CD8-positive, alpha-beta T cell (primary cell): ENCODE measurements at regions of chr3 and their contacts with region 1.

Region 1: DNA sequence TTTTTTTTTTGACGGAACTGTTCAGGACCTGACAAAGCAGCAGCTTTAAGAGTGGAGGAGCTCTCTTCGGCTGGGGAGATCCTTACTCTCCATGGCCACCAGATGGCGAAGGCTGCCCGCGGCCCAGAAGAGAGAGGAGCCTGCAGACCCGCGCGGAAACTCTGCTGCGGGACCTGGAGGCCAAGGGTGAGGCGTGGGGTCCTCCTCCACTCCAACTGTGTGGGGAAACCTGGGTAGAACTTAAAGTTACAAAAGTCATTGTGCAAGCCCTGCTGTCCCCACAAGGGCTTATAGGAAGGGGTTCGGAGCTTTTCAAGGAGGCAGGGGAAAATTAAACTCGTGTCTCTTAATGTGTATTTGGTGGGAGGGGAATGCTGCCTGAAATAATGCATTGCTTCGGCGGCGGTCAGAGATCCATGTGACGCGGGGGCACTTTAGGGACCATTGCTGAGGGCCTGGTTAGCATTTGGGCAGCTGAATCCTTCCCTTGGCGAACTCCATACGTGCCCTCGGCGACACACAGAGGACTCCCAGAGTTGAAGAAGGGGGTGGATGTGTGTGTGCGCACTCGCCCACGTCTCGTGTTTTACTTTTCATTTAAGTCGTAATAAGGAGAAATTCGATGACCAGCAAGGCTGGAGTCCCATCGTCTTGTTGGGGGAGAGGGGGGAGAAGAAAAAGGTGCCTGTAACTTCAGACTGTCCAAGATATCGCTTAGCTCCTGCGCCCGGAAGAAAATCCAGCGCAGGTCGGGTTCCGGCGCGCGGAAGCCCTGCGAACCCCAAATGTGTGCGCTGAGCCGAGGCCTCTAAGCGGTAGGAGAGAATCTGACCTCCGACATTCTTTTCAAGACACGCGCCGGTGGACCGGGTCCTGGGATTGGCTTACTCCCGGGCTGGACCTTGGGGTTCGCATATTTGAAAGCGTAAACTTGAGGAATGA is 9.7 kb downstream of the EOMES start:
- DNase-seq: peak; percentile 61 to 91 (median 79)
- ATAC-seq: peak; percentile 86
- H3K4me3 ChIP-seq: peak overlapping the region; percentile 73 to 94
- H3K4me3 Mint-ChIP-seq: peak overlapping the region; percentile 95
- H3K27ac ChIP-seq: peak overlapping the region; percentile 44 to 74
- H3K27ac Mint-ChIP-seq: peak overlapping the region; percentile 87
- H3K4me1 ChIP-seq: peaks cover 20% of the 10 kb centered on the region
- H3K4me1 Mint-ChIP-seq: peaks cover 28% of the 10 kb centered on the region
- H3K27me3 ChIP-seq: peaks cover 4 to 11% of the 10 kb centered on the region in 2 experiments
- H3K27me3 Mint-ChIP-seq: peaks cover 18% of the 10 kb centered on the region
- CTCF ChIP-seq: peak; percentile 67

Region 2: DNA sequence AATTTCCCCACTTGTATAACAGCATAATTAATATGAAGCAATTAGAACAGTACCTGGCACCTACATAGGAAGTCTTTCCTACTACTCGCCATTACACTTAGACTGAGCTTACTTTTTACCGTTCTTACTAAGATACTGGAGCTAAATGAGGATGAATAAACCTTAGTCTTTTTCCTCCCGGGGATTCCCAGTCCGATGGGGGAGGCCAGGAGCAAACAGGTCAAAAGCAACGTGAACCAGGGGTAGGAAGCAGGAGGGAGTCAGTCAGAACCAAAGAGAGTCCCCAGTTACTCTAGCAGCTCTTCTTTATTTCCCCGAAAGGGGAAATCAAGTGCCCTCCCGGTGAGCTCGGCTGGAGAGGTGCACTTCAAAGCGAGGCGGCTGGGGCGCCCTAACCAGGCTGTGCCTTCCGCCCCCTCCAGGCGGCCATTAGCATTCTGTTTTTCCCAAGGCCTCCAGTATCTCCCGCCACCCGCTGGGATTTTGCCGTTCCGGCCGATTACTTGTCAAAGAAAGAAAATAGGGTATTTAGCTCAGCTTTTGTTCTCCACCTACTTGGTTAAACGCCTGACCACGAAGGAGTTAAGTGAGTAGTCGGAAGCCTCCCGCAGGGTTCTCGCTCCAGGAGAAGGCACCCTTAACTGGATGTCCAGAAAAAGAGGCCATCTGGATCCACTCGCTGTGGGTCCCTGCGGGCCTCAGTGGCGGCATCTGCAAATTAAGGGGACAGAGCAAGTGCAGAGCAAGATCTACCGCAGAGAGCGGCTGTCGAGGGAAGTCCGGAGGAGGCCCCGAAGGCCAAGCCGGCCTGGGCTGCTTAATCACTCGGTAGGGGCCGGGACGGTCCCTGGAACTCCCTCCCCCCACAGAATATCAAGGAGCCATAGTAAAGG is 16.0 kb after region 1 on chr3:
- CTCF ChIA-PET with region 1: interaction called, 69 read pairs
- POLR2A ChIA-PET with region 1: interaction called, 30 read pairs
- intact Hi-C with region 1: no loop called
- DNase-seq: peak in 2 of 9 experiments; percentile 51 to 52
- ATAC-seq: peak; percentile 48
- H3K4me3 ChIP-seq: no peak overlapping the region
- H3K4me3 Mint-ChIP-seq: peak overlapping the region; percentile 54
- H3K27ac ChIP-seq: no peak overlapping the region
- H3K27ac Mint-ChIP-seq: no peak overlapping the region
- H3K4me1 ChIP-seq: peaks cover 43% of the 10 kb centered on the region
- H3K4me1 Mint-ChIP-seq: peaks cover 49% of the 10 kb centered on the region
- H3K27me3 ChIP-seq: peaks cover 40 to 60% of the 10 kb centered on the region in 2 experiments
- H3K27me3 Mint-ChIP-seq: peaks cover 73% of the 10 kb centered on the region
- CTCF ChIP-seq: no peak

Region 3: DNA sequence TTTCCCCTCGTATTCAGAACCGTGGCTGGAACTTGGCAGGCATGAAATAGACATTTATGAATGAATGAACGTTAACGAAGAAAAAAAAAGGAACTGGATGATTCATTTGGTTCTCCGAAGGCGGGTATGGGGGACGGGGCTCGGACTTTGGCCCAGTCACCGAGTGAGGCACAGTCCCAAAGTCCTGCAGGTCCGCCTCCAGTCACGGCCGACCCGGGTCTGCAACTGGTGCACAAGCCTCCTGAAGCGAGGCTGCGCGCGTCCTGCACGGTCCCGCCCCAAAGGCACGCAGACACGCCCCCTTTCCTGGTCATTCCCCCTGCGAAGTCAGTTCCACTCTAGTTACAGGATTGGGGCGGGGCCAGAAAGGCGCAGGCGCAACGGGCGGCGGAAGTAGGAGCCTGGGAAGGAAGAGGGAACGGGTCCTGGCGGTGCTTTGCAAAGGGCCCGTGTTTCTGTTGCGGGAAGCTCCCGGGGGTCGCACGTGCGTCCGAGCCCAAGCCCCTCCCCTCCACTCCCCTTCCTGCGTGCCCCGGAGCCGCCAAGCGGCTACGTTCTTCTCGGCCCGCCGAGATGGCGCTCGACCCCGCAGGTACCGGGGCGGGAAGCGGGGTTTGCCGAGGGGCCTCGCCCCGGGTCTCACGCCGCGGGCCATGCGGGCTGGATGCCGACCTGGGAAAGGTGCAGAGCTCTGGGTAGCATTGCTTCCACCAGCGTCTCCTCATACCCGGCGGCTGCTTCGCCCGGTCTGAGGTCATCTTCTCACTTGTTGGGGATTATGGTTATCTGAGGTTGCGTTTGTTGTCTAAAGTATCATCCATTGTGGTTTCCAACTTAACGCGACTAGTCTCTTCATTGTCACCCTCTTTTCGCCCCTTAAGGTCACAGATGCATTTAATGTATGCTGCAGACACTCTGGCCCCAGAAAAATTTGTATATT is 529.1 kb after region 1 on chr3 and contains the start of gene CMC1:
- CTCF ChIA-PET with region 1: interaction called, 11 read pairs
- POLR2A ChIA-PET with region 1: interaction called, 5 read pairs
- intact Hi-C with region 1: loop called in 1 of 2 experiments (anchors 2 kb)
- DNase-seq: peak; percentile 68 to 94 (median 90)
- ATAC-seq: peak; percentile 90
- H3K4me3 ChIP-seq: peak within 1 kb of the TSS; percentile 76 to 89
- H3K4me3 Mint-ChIP-seq: peak within 1 kb of the TSS; percentile 95
- H3K27ac ChIP-seq: peak within 1 kb of the TSS; percentile 53 to 77
- H3K27ac Mint-ChIP-seq: peak within 1 kb of the TSS; percentile 92
- H3K4me1 ChIP-seq: peaks cover 29% of the 10 kb centered on the region
- H3K4me1 Mint-ChIP-seq: peaks cover 50% of the 10 kb centered on the region
- H3K27me3 ChIP-seq: no peaks in the 10 kb centered on the region
- H3K27me3 Mint-ChIP-seq: no peaks in the 10 kb centered on the region
- CTCF ChIP-seq: no peak
- total RNA-seq, gene CMC1: 28.0 to 31.0 TPM

Region 4: GRCh38 chr3:28308196-28308595 is 595.8 kb after region 1 on chr3:
- CTCF ChIA-PET with region 1: interaction called, 12 read pairs
- POLR2A ChIA-PET with region 1: no interaction called
- intact Hi-C with region 1: no loop called
- DNase-seq: no peak
- ATAC-seq: no peak
- H3K4me3 ChIP-seq: no peak overlapping the region
- H3K4me3 Mint-ChIP-seq: no peak overlapping the region
- H3K27ac ChIP-seq: no peak overlapping the region
- H3K27ac Mint-ChIP-seq: no peak overlapping the region
- H3K4me1 ChIP-seq: no peaks in the 10 kb centered on the region
- H3K4me1 Mint-ChIP-seq: peaks cover 18% of the 10 kb centered on the region
- H3K27me3 ChIP-seq: no peaks in the 10 kb centered on the region
- H3K27me3 Mint-ChIP-seq: no peaks in the 10 kb centered on the region
- CTCF ChIP-seq: no peak

Region 5: DNA sequence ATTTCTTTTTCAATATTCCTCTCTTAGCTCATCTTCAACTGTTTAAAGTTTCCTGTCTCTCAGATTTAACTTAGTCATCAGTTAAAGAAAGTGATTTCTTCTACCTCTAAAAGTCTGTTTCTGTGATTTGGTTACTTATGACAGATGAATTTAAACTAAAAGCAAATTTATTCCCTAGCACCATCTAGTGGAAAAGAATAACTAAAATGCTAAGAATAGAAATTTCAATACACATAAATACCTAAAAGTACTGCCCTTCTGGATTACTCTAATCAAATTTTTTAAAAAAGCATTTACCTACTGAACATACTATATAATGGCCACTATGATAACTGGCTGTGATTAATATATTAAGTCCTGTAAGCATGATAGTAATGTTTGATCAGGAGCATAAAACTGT is 622.1 kb after region 1 on chr3:
- CTCF ChIA-PET with region 1: interaction called, 130 read pairs
- POLR2A ChIA-PET with region 1: interaction called, 28 read pairs
- intact Hi-C with region 1: no loop called
- DNase-seq: peak in 1 of 9 experiments; percentile 27
- ATAC-seq: no peak
- H3K4me3 ChIP-seq: no peak overlapping the region
- H3K4me3 Mint-ChIP-seq: no peak overlapping the region
- H3K27ac ChIP-seq: no peak overlapping the region
- H3K27ac Mint-ChIP-seq: no peak overlapping the region
- H3K4me1 ChIP-seq: peaks cover 7% of the 10 kb centered on the region
- H3K4me1 Mint-ChIP-seq: peaks cover 12% of the 10 kb centered on the region
- H3K27me3 ChIP-seq: no peaks in the 10 kb centered on the region
- H3K27me3 Mint-ChIP-seq: no peaks in the 10 kb centered on the region
- CTCF ChIP-seq: peak; percentile 42